Endothelial cell of umbilical vein (primary cell): ENCODE measurements at regions of chr16 and their contacts with region 1.

Region 1: GRCh38 chr16:15427648-15428239 is 6.6 kb upstream of the BMERB1 start:
- DNase-seq: peak; percentile 82
- H3K4me3 ChIP-seq: no peak overlapping the region
- H3K27ac ChIP-seq: no peak overlapping the region
- H3K4me1 ChIP-seq: no peaks in the 10 kb centered on the region
- H3K27me3 ChIP-seq: peaks cover 0 to 4% of the 10 kb centered on the region in 2 experiments
- CTCF ChIP-seq: peak; percentile 60 to 61
- POLR2A ChIP-seq: no peak

Region 2: GRCh38 chr16:15466886-15467781 is 39.4 kb after region 1 on chr16:
- CTCF ChIA-PET with region 1: interaction called, 20 read pairs
- POLR2A ChIA-PET with region 1: no interaction called
- dilution Hi-C with region 1: no loop called
- intact Hi-C with region 1: loop called (anchors 1 kb)
- DNase-seq: no peak
- H3K4me3 ChIP-seq: no peak overlapping the region
- H3K27ac ChIP-seq: no peak overlapping the region
- H3K4me1 ChIP-seq: no peaks in the 10 kb centered on the region
- H3K27me3 ChIP-seq: no peaks in the 10 kb centered on the region
- CTCF ChIP-seq: no peak
- POLR2A ChIP-seq: no peak

Region 3: GRCh38 chr16:15548482-15548891 is 120.7 kb after region 1 on chr16:
- CTCF ChIA-PET with region 1: interaction called, 161 read pairs
- POLR2A ChIA-PET with region 1: interaction called, 7 read pairs
- dilution Hi-C with region 1: no loop called
- intact Hi-C with region 1: no loop called
- DNase-seq: no peak
- H3K4me3 ChIP-seq: no peak overlapping the region
- H3K27ac ChIP-seq: no peak overlapping the region
- H3K4me1 ChIP-seq: no peaks in the 10 kb centered on the region
- H3K27me3 ChIP-seq: no peaks in the 10 kb centered on the region
- CTCF ChIP-seq: no peak
- POLR2A ChIP-seq: no peak

Region 4: DNA sequence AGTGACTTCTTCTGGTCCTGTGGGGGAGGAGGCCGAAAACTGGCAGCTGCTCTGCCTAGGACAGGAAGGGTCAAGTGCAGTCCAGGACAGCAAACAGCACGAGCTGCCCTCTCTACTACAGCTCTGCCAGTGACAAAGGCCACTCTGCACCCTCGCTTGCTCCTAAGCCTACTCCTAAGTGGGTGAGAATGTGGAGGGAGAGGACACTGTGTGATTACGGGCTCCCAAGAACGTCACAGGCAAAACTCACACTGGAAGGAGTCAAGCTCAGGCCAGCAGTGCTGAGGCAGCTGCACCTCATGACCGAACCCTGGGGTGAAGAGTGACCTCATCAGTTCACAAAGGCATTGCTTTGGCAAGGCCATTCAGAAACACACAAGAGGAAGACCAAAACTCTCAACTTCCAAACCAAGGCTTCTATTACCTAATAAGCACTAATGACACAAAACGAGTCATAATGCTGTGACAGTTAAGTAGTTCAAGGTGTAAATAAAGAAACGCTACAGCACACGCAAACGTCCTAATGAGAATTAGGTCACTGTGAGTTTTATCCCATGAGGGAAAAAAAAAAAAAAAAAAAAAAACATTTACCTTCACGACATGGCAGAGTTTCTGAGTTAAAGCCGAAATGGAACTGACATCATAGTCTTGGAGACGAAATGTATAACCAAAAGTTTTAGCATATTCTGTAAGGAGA is 180.1 kb after region 1 on chr16:
- CTCF ChIA-PET with region 1: interaction called, 11 read pairs
- POLR2A ChIA-PET with region 1: no interaction called
- dilution Hi-C with region 1: no loop called
- intact Hi-C with region 1: no loop called
- DNase-seq: no peak
- H3K4me3 ChIP-seq: no peak overlapping the region
- H3K27ac ChIP-seq: no peak overlapping the region
- H3K4me1 ChIP-seq: no peaks in the 10 kb centered on the region
- H3K27me3 ChIP-seq: no peaks in the 10 kb centered on the region
- CTCF ChIP-seq: no peak
- POLR2A ChIP-seq: no peak

Region 5: DNA sequence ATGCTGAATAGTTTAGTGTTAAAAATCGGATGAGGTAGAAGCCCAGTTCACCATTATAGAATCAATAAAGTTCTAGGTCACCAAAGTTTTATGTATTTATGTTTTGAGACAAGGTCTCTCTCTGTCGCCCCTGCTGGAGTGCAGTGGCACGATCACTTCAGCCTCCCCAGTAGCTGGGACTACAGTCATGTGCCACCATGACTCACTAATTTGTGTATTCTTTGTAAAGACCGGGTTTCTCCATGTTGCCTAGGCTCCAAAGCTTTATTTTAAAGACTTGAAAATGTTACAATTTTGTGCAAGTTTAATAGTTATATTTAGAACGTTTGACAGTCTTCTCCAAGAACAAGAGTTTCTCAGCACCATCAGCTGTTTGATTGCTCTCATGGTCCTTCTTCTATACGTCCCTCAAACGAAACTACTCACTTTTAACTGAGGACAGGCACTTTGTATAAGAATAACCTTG is 254.4 kb after region 1 on chr16:
- CTCF ChIA-PET with region 1: interaction called, 11 read pairs
- POLR2A ChIA-PET with region 1: no interaction called
- dilution Hi-C with region 1: no loop called
- intact Hi-C with region 1: loop called (anchors 2 kb)
- DNase-seq: peak; percentile 84
- H3K4me3 ChIP-seq: no peak overlapping the region
- H3K27ac ChIP-seq: peak overlapping the region; percentile 42
- H3K4me1 ChIP-seq: peaks cover 5% of the 10 kb centered on the region
- H3K27me3 ChIP-seq: no peaks in the 10 kb centered on the region
- CTCF ChIP-seq: peak; percentile 49 to 68
- POLR2A ChIP-seq: no peak

Region 6: GRCh38 chr16:16191493-16192167 is 763.9 kb after region 1 on chr16:
- CTCF ChIA-PET with region 1: no interaction called
- POLR2A ChIA-PET with region 1: no interaction called
- dilution Hi-C with region 1: no loop called
- intact Hi-C with region 1: loop called (anchors 2 kb)
- DNase-seq: peak; percentile 77
- H3K4me3 ChIP-seq: no peak overlapping the region
- H3K27ac ChIP-seq: no peak overlapping the region
- H3K4me1 ChIP-seq: no peaks in the 10 kb centered on the region
- H3K27me3 ChIP-seq: peaks cover 0 to 1% of the 10 kb centered on the region in 2 experiments
- CTCF ChIP-seq: no peak
- POLR2A ChIP-seq: no peak